Panc1 (cell line): ENCODE measurements at regions of chr2 and their contacts with region 1.

Region 1: DNA sequence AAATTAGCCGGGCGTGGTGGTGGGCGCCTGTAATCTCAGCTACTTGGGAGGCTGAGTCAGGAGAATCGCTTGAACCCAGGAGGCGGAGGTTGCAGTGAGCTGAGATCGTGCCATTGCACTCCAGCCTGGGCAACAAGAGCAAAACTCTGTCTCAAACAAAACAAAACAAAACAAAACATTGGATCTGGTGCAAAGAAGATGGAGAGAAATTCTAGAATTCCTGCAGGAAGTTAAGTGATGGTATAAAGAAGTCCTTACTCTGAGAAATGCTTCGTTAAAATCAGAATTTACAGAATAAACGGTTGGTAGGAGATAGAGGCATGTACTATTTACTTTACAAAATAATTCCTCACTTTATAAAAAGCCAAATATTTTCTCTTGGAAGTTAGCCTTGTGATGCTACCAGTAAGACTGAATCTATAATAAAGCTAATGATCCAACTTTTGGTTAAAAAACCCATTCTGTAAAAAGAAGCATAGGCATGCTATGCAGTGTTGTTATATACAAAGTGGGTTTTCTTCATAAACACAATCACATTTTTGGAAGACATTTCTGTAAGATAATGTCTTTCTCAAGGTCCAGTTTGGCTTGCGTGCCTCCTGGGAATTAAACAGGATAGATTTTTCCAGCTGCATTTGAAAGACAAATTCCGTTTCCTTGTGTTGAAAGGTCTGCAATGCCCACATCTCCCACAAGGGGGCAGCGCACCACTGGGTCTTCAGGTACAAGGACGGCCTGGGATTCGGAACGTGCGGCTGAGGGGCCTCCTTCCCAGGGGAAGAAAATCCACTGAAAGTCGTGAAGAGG is 35.6 kb upstream of the PNO1 start:
- DNase-seq: peak; percentile 74
- ATAC-seq: peak; percentile 79
- H3K4me3 ChIP-seq: peak overlapping the region in 1 of 2 experiments; percentile 36; a peak in 2 of 4 replicates
- H3K27ac ChIP-seq: no peak overlapping the region
- H3K4me1 ChIP-seq: no peaks in the 10 kb centered on the region
- H3K27me3 ChIP-seq: no peaks in the 10 kb centered on the region
- CTCF ChIP-seq: peak; percentile 97

Region 2: DNA sequence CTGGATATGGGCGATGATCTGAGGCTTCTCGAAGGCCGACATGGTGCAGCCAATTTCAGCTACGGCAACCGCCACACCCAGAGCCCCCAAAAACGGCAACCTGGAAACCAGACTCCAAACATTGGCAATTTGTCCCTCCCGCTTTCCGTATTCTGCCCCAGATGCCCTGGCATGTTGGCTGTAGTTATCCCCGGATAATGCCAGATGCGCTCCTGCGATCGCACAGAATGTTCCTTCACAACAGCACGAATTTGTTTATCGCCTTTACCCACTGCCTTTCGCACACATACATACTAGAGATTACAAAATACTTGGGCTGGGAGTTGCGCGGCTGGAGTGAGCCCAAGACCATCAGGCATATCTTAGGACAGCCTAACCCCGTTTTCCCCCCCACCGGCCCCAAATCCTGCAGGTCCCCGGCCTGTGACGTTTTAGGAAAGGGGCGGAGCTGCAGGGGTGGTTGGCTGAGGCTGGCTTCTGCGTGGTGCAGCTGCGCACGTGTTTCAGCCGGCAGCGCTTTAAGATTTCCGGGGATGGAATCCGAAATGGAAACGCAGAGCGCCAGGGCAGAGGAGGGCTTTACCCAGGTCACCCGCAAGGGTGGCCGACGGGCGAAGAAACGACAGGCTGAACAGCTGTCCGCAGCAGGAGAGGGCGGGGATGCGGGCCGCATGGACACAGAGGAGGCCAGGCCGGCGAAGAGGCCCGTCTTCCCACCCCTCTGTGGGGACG is 35.5 kb after region 1 on chr2 and contains the start of gene PNO1:
- CTCF ChIA-PET with region 1: no interaction called
- POLR2A ChIA-PET with region 1: no interaction called
- in situ Hi-C with region 1: no loop called
- intact Hi-C with region 1: no loop called
- DNase-seq: peak; percentile 92
- ATAC-seq: peak; percentile 98
- H3K4me3 ChIP-seq: peak within 1 kb of the TSS; percentile 97 to 99
- H3K27ac ChIP-seq: peak within 1 kb of the TSS; percentile 97
- H3K4me1 ChIP-seq: peaks cover 8% of the 10 kb centered on the region; the same call in 1 of the 2 replicates
- H3K27me3 ChIP-seq: no peaks in the 10 kb centered on the region
- CTCF ChIP-seq: no peak
- total RNA-seq, gene PNO1: 37.7 TPM

Region 3: DNA sequence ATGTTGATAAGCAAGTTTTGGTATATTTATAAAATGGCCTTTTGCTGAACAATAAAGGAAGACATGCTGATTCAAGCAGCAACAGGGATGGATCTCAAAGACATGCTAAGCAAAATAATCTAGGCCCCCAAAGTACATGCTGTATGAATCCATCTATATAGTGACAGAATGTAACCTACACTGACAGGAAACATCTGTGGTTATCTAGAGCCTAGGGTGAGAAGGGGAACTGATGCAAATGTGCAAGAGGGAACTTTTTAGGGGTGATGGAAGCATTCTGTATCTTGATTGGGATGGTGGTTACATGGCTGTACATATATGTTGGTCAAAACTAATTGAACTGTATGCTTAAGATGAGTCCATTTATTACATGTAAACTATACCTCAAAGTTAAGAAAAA is 173.4 kb after region 1 on chr2:
- CTCF ChIA-PET with region 1: interaction called, 5 read pairs
- POLR2A ChIA-PET with region 1: no interaction called
- in situ Hi-C with region 1: no loop called
- intact Hi-C with region 1: loop called (anchors 2 kb)
- DNase-seq: no peak
- ATAC-seq: no peak
- H3K4me3 ChIP-seq: no peak overlapping the region
- H3K27ac ChIP-seq: no peak overlapping the region
- H3K4me1 ChIP-seq: no peaks in the 10 kb centered on the region
- H3K27me3 ChIP-seq: no peaks in the 10 kb centered on the region
- CTCF ChIP-seq: no peak